ENCODE measurements at regions of chr16 and their contacts with region 1.

Region 1: DNA sequence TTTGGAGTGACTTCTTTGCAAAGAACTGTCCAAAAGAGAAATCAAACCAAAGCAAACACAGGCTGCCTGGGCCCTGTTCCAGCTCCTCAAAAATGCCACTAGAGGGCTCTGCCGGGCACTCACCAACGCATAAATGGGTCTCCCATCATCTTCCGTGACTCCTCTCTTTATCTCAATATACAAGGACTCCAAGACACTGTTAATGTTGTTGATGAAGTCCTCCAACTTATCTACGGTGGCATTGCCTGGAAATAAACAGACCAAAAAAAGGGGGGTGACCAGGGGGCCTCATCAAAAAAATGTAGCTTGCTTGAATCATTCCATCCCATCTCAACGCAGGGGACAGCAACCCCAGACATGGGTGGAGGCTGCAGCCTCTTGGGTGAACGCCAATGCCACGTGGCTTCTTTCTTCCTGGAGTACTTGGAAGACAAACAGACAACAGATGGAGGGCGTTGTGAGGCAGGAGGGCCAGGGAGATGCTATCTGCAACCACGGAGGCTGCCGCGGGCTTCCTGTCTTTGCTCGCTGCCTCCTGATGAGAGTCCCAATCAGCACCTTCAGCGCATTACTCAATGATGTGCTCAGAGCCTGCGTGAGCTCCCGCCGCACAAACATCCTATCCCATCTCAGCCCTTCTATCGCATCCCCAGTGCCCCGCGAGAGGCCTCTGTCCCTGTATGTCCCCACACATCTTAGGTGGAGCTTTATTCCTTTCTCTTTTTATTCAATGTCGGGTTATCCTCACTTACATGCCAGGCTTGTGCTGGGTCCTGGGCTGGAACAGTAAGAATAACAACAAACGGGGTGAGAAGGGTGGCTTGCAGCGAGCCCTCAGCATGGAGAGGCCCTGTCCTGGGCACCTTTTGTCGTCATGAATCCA is 32.0 kb downstream of the KDM8 start:
- DNase-seq: peak; percentile 94
- ATAC-seq: peak; percentile 31
- H3K4me3 Mint-ChIP-seq: peak overlapping the region; percentile 73
- H3K27ac Mint-ChIP-seq: peak overlapping the region; percentile 98
- H3K4me1 Mint-ChIP-seq: peaks cover 94% of the 10 kb centered on the region
- H3K27me3 Mint-ChIP-seq: no peaks in the 10 kb centered on the region
- CTCF ChIP-seq: peak; percentile 91

Region 2: GRCh38 chr16:27097800-27098230 is 137.5 kb before region 1 on chr16:
- CTCF ChIA-PET with region 1: no interaction called
- POLR2A ChIA-PET with region 1: no interaction called
- intact Hi-C with region 1: no loop called
- DNase-seq: no peak
- ATAC-seq: no peak
- H3K4me3 Mint-ChIP-seq: no peak overlapping the region
- H3K27ac Mint-ChIP-seq: no peak overlapping the region
- H3K4me1 Mint-ChIP-seq: no peaks in the 10 kb centered on the region
- H3K27me3 Mint-ChIP-seq: peaks cover 3% of the 10 kb centered on the region
- CTCF ChIP-seq: no peak

Region 3: GRCh38 chr16:27145630-27146029 is 89.7 kb before region 1 on chr16:
- CTCF ChIA-PET with region 1: no interaction called
- POLR2A ChIA-PET with region 1: no interaction called
- intact Hi-C with region 1: no loop called
- DNase-seq: no peak
- ATAC-seq: no peak
- H3K4me3 Mint-ChIP-seq: no peak overlapping the region
- H3K27ac Mint-ChIP-seq: no peak overlapping the region
- H3K4me1 Mint-ChIP-seq: no peaks in the 10 kb centered on the region
- H3K27me3 Mint-ChIP-seq: peaks cover 4% of the 10 kb centered on the region
- CTCF ChIP-seq: no peak

Region 4: DNA sequence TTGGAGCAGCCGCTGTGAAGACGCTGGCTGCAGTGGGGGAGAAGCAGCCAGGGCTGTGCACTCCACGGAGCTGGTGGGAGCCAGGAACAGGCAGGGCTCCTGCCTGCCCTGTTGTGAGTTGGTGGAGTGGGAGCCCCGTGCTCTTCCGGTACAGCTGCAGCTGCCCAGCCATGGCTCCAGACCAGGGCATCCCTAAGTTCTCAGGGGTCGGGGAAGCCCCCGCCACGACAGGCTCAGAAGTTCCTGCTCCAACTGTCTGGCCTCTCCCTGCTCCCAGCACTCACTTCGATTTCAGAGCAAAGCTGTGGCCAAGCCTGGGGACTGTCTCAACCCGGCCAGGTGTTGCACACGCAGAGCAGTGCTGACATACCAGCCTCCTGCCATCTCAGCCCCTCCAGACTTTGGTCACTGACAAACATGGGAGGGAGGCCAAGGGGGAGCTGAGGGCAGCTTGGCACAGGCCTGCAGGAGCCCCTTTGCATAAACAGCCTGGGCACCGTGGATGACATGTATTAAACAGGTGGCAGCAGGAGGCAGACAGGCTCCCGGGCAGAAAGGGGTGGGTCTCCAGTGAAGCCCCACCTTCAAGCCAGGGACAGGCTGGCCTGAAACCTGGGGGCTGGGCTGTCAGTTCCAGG is 45.8 kb before region 1 on chr16:
- CTCF ChIA-PET with region 1: no interaction called
- POLR2A ChIA-PET with region 1: no interaction called
- intact Hi-C with region 1: no loop called
- DNase-seq: no peak
- ATAC-seq: peak; percentile 45
- H3K4me3 Mint-ChIP-seq: no peak overlapping the region
- H3K27ac Mint-ChIP-seq: no peak overlapping the region
- H3K4me1 Mint-ChIP-seq: peaks cover 6% of the 10 kb centered on the region
- H3K27me3 Mint-ChIP-seq: no peaks in the 10 kb centered on the region
- CTCF ChIP-seq: no peak

Region 5: DNA sequence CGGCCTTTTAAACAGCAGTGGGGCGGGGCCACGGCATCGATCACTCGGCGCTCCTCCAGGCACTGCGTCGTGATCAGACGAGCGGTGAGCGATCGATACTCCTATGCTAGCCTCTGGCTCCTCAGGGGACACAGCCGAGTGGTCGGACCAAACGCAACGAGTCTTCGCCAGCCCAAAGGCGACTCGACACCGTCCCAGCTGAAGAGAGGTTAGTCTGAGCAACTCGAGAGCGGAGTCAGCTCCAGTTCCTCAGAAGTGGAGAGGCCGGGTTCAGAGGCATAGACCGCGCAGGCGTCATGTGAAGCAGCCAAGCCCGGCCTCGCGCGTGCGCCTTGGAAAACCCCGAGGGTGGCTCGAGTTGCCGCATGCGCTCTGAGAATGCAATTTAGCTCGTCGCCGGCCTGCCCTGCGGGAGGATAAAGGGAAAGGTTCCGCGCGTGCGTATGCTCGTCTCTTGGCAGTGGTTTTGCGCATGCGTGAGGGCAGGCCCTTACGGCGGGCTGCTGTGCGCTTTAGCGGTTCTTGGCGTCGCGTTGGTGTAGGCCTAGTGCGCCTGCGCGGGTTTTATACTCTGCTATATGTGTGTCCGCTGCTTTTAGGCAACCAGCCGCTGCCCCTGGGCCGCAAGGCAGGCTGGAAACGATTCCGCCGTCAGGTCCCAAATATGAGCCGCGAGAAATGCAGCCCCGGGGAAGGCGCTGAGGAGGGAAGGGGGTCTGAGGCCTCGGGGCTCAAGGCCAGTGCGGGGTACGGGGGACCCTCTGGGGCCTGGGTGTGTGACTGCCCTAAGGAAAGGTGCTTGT is 31.7 kb before region 1 on chr16 and contains the start of gene KDM8:
- CTCF ChIA-PET with region 1: interaction called, 17 read pairs
- POLR2A ChIA-PET with region 1: interaction called, 11 read pairs
- intact Hi-C with region 1: loop called (anchors 5 kb)
- DNase-seq: peak; percentile 99
- ATAC-seq: peak; percentile 92
- H3K4me3 Mint-ChIP-seq: peak within 1 kb of the TSS; percentile 83
- H3K27ac Mint-ChIP-seq: peak within 1 kb of the TSS; percentile 100
- H3K4me1 Mint-ChIP-seq: peaks cover 48% of the 10 kb centered on the region
- H3K27me3 Mint-ChIP-seq: no peaks in the 10 kb centered on the region
- CTCF ChIP-seq: no peak
- total RNA-seq, gene KDM8: 10.9 to 12.7 TPM

Region 6: GRCh38 chr16:27253526-27253930 is 18.2 kb after region 1 on chr16:
- CTCF ChIA-PET with region 1: interaction called, 29 read pairs
- POLR2A ChIA-PET with region 1: interaction called, 126 read pairs
- intact Hi-C with region 1: loop called (anchors 2 kb)
- DNase-seq: peak; percentile 44
- ATAC-seq: peak; percentile 52
- H3K4me3 Mint-ChIP-seq: peak overlapping the region; percentile 50
- H3K27ac Mint-ChIP-seq: peak overlapping the region; percentile 96
- H3K4me1 Mint-ChIP-seq: peaks cover 86% of the 10 kb centered on the region
- H3K27me3 Mint-ChIP-seq: no peaks in the 10 kb centered on the region
- CTCF ChIP-seq: no peak

Region 7: DNA sequence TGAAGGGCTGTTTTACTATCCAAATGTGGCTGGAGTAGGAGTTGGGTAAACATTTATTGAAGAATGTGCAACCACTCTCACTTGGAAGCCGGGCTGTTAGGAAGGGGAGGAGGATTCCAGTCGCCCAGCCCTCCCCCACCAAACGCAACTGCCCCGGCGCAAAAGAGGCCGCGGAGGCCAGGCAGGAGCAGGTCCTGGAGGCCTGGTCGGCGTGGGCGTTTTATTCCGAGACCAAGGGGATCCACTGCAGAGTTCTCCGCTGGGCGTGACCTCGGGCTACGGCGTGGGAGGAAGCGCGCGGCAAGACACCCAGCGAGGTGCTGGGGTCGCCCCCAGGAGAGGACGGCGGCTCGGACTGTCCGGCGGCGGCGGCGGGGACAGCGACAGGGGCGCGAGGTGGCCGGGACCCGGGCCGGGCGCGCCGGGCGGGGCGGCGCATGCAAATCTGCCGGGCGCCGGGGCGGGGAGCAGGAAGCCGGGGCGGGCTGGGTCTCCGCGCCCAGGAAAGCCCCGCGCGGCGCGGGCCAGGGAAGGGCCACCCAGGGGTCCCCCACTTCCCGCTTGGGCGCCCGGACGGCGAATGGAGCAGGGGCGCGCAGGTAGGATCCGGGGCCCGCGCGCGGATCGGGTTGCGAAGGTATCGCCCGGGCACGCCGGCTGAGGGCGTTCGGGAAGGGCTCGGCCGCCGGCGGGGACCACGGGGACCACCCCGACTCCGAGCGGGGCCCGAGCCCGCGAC is 78.3 kb after region 1 on chr16 and contains the start of gene IL4R:
- CTCF ChIA-PET with region 1: interaction called, 203 read pairs
- POLR2A ChIA-PET with region 1: interaction called, 257 read pairs
- intact Hi-C with region 1: loop called (anchors 1 kb)
- DNase-seq: peak; percentile 91
- ATAC-seq: peak; percentile 10
- H3K4me3 Mint-ChIP-seq: peak within 1 kb of the TSS; percentile 89
- H3K27ac Mint-ChIP-seq: peak within 1 kb of the TSS; percentile 98
- H3K4me1 Mint-ChIP-seq: peaks cover 26% of the 10 kb centered on the region
- H3K27me3 Mint-ChIP-seq: no peaks in the 10 kb centered on the region
- CTCF ChIP-seq: no peak
- total RNA-seq, gene IL4R: 236 to 245 TPM

Region 8: DNA sequence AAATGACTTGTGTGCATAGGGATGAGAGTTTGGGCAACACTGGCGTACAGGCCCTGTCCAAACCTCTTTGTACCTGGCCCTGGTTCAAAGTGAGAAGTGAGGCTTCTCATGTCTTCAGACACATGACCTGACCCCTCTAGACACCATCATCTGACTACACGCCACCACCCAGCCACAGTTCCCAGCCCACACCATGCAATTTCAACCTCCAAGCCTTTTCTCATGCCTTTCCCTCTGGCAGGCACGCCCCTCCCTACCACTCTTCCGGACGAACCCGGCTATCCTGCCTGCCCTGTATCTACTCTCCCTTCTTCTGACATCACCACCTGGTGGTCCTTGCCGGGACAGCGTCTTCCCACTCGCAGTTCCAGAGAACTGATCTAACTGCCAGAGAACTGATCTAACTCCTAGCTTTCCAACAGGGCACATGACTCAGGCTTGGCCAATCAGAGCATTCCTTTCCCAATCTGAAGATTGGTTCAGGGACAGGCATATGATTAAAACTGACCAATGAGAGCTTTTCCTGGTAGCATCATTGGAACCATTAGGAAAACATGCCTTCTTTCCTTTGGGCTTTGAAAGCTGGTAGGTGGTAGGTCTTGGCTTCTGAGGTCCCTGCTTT is 139.6 kb after region 1 on chr16:
- CTCF ChIA-PET with region 1: interaction called, 38 read pairs
- POLR2A ChIA-PET with region 1: interaction called, 4 read pairs
- intact Hi-C with region 1: no loop called
- DNase-seq: peak; percentile 73
- ATAC-seq: peak; percentile 47
- H3K4me3 Mint-ChIP-seq: no peak overlapping the region
- H3K27ac Mint-ChIP-seq: no peak overlapping the region
- H3K4me1 Mint-ChIP-seq: peaks cover 41% of the 10 kb centered on the region
- H3K27me3 Mint-ChIP-seq: no peaks in the 10 kb centered on the region
- CTCF ChIP-seq: peak; percentile 47